CD8-positive, alpha-beta T cell (primary cell): ENCODE measurements at regions of chr9 and their contacts with region 1.

Region 1: GRCh38 chr9:79408617-79409016 is 163.1 kb upstream of the TLE4 start:
- DNase-seq: no peak
- ATAC-seq: no peak
- H3K4me3 ChIP-seq: no peak overlapping the region
- H3K4me3 Mint-ChIP-seq: no peak overlapping the region
- H3K27ac ChIP-seq: no peak overlapping the region
- H3K27ac Mint-ChIP-seq: no peak overlapping the region
- H3K4me1 ChIP-seq: no peaks in the 10 kb centered on the region
- H3K4me1 Mint-ChIP-seq: no peaks in the 10 kb centered on the region
- H3K27me3 ChIP-seq: no peaks in the 10 kb centered on the region
- H3K27me3 Mint-ChIP-seq: no peaks in the 10 kb centered on the region
- CTCF ChIP-seq: no peak

Region 2: DNA sequence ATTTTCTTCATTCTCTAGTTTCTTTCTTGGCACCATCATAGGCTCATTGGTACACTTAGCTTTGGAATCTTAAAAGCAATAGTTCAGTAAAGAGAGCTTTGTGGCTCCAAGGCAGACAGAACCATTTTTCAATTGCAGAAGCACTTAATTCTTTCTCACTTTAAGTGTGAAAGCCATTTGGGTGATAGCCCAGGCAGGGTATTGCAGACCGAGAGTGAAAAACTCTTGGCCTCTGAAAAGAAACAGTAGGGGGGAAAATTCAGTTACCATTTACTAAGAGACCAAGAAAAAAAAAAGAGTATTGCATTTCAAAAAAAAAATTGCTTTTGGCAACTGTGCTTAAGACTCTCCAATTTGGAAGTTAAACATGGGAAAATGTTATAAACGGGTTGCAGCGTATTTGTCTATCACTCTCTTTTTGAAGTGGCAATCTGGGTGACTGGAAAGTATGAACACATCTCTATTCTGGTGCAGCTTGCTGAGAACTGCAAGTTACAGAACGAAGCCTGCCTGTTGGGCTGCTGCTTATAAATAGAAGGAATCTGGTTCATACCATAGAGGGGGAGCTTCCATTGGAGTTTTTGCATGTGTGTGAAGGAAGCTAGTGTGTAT is 333.6 kb after region 1 on chr9:
- CTCF ChIA-PET with region 1: no interaction called
- POLR2A ChIA-PET with region 1: no interaction called
- intact Hi-C with region 1: loop called in 1 of 2 experiments (anchors 10 kb)
- DNase-seq: no peak
- ATAC-seq: no peak
- H3K4me3 ChIP-seq: no peak overlapping the region
- H3K4me3 Mint-ChIP-seq: no peak overlapping the region
- H3K27ac ChIP-seq: no peak overlapping the region
- H3K27ac Mint-ChIP-seq: no peak overlapping the region
- H3K4me1 ChIP-seq: no peaks in the 10 kb centered on the region
- H3K4me1 Mint-ChIP-seq: no peaks in the 10 kb centered on the region
- H3K27me3 ChIP-seq: no peaks in the 10 kb centered on the region
- H3K27me3 Mint-ChIP-seq: no peaks in the 10 kb centered on the region
- CTCF ChIP-seq: no peak